ENCODE measurements at regions of chr20 and their contacts with region 1.

Region 1: DNA sequence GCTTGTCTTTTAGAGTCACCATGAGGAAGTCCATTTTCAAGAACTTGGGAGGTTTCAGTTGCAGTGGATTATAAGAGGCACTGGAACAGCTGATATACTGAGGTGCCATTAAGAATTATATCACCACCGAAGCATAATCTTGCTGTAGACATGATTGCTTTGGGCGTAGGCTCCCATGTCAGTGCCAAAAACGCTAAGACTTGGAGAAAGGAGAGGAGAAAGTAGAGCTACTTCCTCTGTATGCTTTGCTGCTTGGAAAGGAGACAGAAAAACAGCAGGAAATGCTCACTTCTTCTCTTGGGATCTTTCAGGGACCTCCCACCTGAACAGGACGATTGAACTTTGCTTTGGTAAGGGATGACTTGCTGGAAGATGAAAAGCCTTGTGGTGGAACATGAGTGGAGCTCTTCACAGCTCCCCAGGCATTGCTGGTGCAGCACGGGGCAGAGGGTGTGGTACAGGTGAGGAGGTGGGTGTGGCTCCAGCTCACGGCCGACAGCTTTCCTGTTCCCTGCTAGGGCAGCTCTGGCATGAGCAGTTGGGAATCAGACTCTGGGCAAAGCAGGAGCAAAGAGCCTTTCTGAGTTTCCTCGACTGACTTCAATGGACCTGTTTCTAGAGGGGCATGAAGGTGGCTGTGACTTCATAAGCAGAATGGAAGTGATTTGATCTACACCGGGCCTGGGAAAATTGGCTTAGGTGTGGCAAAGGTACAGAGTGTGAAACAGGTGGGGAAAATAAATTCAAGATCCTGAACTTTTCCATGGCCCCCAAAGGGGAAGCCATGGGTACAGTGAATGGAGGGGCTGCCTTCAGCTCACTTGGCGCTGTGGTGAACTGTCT is 190.5 kb upstream of the JAG1 start:
- DNase-seq: peak in 1 of 2 donors; percentile 55
- ATAC-seq: peak; percentile 50
- H3K4me3 ChIP-seq: peak overlapping the region in 1 of 2 donors; percentile 24
- H3K27ac ChIP-seq: peak overlapping the region; percentile 39 to 76
- H3K4me1 ChIP-seq: peaks cover 5 to 8% of the 10 kb centered on the region in 2 donors
- H3K27me3 ChIP-seq: no peaks in the 10 kb centered on the region

Region 2: DNA sequence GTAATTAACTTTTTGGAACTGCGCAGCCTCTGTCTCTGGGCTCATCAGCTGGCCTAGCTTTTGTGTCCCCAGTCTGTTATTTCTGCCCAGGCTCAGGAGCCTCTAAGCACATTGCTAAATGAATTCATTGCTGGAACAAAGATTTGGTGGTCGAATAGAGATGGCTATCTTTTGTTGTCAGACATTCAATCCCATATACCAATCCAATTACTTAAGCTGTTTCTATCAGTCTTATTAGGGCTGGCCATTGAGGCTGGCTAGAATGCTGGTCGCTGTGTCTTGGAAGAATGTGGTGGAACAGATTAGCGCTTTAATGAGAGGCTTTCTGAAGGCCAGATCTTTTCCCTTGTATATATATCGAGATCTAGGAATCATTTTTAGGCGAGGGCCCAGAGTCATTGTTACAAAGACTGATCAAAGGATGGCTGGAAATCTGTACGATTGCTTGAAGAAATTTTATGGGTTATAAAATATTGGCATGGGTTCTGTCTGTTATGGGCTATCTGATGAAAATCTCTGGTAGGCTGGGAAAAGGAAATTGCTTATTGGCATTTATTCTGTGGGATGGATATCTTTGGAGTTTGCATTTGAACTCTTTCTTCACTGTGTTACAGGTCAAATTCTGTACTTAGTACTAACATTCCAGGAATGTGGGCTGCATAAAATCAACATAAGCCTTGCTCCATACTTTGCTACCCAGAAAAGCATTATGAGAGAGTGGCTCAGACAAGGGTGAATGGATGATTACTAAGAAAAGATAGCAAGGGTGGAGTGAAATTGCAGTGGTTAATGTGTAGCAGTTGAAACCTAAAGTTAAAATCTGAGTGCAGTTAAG is 155.7 kb before region 1 on chr20:
- intact Hi-C with region 1: loop called in 1 of 2 experiments (anchors 10 kb)
- DNase-seq: no peak
- ATAC-seq: no peak
- H3K4me3 ChIP-seq: no peak overlapping the region
- H3K27ac ChIP-seq: peak overlapping the region in 1 of 2 donors; percentile 33
- H3K4me1 ChIP-seq: peaks cover 1 to 6% of the 10 kb centered on the region in 2 donors
- H3K27me3 ChIP-seq: no peaks in the 10 kb centered on the region

Region 3: GRCh38 chr20:10731190-10731965 is 132.9 kb before region 1 on chr20:
- intact Hi-C with region 1: no loop called
- DNase-seq: peak in 1 of 2 donors; percentile 57
- ATAC-seq: no peak
- H3K4me3 ChIP-seq: no peak overlapping the region
- H3K27ac ChIP-seq: no peak overlapping the region
- H3K4me1 ChIP-seq: peaks cover 0 to 12% of the 10 kb centered on the region in 2 donors
- H3K27me3 ChIP-seq: no peaks in the 10 kb centered on the region

Region 4: GRCh38 chr20:10761232-10761631 is 103.1 kb before region 1 on chr20:
- intact Hi-C with region 1: loop called in 1 of 2 experiments (anchors 5 kb)
- DNase-seq: no peak
- ATAC-seq: peak; percentile 19
- H3K4me3 ChIP-seq: peak overlapping the region in 1 of 2 donors; percentile 15
- H3K27ac ChIP-seq: peak overlapping the region in 1 of 2 donors; percentile 53
- H3K4me1 ChIP-seq: peaks cover 3 to 4% of the 10 kb centered on the region in 2 donors
- H3K27me3 ChIP-seq: no peaks in the 10 kb centered on the region

Region 5: GRCh38 chr20:10919396-10920140 is 55.3 kb after region 1 on chr20:
- intact Hi-C with region 1: loop called in 1 of 2 experiments (anchors 5 kb)
- DNase-seq: peak; percentile 79 to 81
- ATAC-seq: peak; percentile 70
- H3K4me3 ChIP-seq: no peak overlapping the region
- H3K27ac ChIP-seq: peak overlapping the region in 1 of 2 donors; percentile 52
- H3K4me1 ChIP-seq: peaks cover 0 to 3% of the 10 kb centered on the region in 2 donors
- H3K27me3 ChIP-seq: no peaks in the 10 kb centered on the region

Region 6: GRCh38 chr20:10963717-10964266 is 99.5 kb after region 1 on chr20:
- intact Hi-C with region 1: no loop called
- DNase-seq: no peak
- ATAC-seq: no peak
- H3K4me3 ChIP-seq: no peak overlapping the region
- H3K27ac ChIP-seq: no peak overlapping the region
- H3K4me1 ChIP-seq: no peaks in the 10 kb centered on the region
- H3K27me3 ChIP-seq: no peaks in the 10 kb centered on the region

Measured in aorta (tissue), 5 donors.